ENCODE measurements at regions of chr11 and their contacts with region 1.

Region 1: DNA sequence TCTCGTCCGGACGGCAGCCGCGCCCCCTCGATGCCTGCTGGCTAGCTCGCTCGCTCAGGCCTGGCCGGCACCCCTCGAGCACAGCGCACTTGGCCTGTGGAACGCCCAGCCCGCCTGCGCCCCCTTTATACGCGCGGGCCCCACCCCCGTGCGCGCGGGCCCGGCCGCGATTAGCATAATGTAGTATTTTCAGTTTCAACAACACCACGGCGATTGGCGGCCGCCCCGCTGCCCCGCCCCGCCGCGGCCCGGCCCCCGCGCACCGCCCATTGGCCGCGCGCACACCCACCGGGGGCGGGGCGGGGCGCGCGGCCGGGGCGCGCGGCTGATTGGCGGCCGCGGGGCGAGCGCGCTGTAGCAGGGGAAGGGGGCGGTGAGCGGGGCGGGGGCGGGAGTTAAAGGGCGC is at the start of gene CDKN1C:
- DNase-seq: no peak
- ATAC-seq: peak; percentile 70
- H3K4me3 ChIP-seq: peak within 1 kb of the TSS; percentile 56 to 64
- H3K27ac ChIP-seq: no peak within 1 kb of the TSS
- H3K4me1 ChIP-seq: peaks cover 6% of the 10 kb centered on the region; the same call in 1 of the 2 replicates
- H3K27me3 ChIP-seq: no peaks in the 10 kb centered on the region
- CTCF ChIP-seq: no peak
- total RNA-seq, gene CDKN1C: 4.6 TPM

Region 2: DNA sequence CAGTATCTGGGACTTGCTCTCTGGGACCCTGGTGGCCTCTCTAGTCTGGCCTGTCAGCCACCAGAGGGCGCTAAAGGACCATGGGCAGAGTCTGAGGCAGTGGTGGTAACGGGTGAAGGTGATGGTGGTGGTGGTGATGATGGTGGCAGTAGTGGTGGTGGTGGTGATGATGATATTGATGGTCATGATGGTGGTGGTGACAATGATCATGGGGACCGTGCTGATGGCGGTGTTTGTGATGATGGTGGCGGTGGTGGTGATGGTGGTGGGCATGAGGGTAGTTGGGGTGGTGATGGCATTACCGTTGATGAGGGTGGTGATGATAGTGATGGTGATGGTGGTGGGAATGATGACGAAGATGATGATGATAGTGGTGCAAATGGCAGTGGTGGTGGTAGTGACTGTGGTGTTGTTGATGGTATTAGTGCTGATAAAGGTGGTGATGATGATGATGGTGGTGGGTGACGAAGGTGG is 457.3 kb before region 1 on chr11:
- CTCF ChIA-PET with region 1: no interaction called
- POLR2A ChIA-PET with region 1: no interaction called
- in situ Hi-C with region 1: no loop called
- intact Hi-C with region 1: loop called (anchors 5 kb)
- DNase-seq: peak; percentile 17
- ATAC-seq: peak; percentile 88
- H3K4me3 ChIP-seq: no peak overlapping the region
- H3K27ac ChIP-seq: no peak overlapping the region
- H3K4me1 ChIP-seq: no peaks in the 10 kb centered on the region
- H3K27me3 ChIP-seq: no peaks in the 10 kb centered on the region
- CTCF ChIP-seq: peak; percentile 99

Region 3: DNA sequence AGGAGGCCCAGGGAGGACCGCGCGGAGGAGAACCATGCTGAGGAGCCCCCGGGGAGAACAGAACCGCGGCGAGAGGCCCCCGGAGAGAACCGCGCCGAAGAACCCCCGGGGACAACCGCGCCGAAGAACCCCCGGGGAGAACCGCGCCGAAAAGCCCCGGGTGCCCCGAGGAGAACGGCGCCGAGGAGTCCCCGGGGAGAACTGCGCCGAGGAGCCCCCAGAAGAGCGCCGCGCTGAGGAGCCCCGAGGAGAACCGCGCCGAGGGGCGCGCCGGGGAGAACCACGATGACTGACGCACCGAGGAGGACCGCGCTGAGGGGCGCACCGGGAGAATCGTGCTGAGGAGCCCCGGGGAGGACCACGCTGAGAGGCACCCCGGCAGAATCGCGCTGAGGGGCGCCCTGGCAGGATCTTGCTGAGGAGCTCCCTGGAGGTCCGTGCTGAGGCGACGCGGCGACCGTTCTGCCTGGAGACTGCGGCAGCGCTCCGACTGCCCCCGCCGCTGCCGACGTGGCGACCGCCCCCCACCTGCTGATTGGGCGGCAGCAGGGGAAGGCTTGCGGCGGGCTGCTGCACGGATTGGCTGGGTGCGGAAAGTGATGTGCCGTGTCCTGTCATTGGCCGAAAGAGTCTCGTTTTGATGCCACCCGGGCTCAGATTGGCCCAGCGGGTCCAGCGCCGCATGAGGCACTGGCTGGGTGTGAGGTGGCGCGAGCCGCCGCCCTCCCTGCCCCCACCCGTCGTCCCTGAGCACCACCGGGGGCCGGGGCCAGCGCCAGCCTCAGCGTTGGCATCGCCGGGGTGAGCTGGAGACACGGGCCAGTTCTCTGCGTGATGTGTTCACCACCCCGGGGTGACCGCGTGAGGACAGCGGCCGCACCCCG is 185.9 kb before region 1 on chr11 and contains the start of gene KCNQ1OT1:
- CTCF ChIA-PET with region 1: interaction called, 6 read pairs
- POLR2A ChIA-PET with region 1: no interaction called
- in situ Hi-C with region 1: no loop called
- intact Hi-C with region 1: loop called (anchors 10 kb)
- DNase-seq: peak; percentile 91
- ATAC-seq: peak; percentile 96
- H3K4me3 ChIP-seq: peak within 1 kb of the TSS; percentile 62 to 65
- H3K27ac ChIP-seq: peak within 1 kb of the TSS; percentile 75
- H3K4me1 ChIP-seq: peaks cover 10% of the 10 kb centered on the region
- H3K27me3 ChIP-seq: no peaks in the 10 kb centered on the region
- CTCF ChIP-seq: no peak
- total RNA-seq, gene KCNQ1OT1: 1.3 TPM

Measured in Panc1 (cell line).